Calu3 (cell line): ENCODE measurements at regions of chr1 and their contacts with region 1.

Region 1: DNA sequence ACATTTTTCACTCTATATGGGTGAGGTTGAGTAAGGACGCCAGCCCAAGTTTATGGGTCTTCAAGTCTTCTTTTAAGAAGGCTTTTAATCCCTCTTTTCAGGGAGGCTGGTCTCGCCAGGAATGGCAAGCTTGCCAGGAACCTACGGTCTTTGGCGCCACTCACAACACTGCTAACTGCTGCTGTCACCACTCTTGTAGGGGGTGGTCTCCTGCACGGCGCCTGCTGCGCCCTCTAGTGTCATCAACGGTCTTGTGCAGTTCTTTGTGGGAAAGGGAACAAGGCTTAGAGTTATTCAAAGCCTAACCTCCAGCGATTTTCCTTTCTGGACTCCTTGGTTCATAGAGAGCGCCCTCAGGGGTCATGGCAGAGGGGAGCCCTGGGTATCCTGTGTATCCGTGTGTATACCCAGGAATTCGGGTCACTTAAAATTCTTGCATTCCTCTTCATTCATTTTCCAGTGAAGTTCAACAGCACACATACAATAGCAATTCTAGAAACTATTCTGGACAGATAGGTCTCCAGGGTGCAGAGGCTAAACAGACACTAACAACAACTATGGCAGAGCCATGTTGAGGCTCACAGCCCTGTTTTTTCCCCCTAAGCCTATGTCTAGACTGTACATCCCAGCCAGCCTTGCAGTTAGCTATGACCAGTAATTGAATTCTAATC is 392.8 kb upstream of the CAMK1G start:
- DNase-seq: peak; percentile 51
- H3K4me3 Mint-ChIP-seq: no peak overlapping the region
- H3K27ac Mint-ChIP-seq: no peak overlapping the region
- H3K4me1 Mint-ChIP-seq: no peaks in the 10 kb centered on the region
- H3K27me3 Mint-ChIP-seq: no peaks in the 10 kb centered on the region
- CTCF ChIP-seq: peak; percentile 51

Region 2: GRCh38 chr1:209076688-209077087 is 114.0 kb before region 1 on chr1:
- CTCF ChIA-PET with region 1: no interaction called
- intact Hi-C with region 1: loop called (anchors 1 kb)
- DNase-seq: no peak
- H3K4me3 Mint-ChIP-seq: no peak overlapping the region
- H3K27ac Mint-ChIP-seq: no peak overlapping the region
- H3K4me1 Mint-ChIP-seq: peaks cover 11% of the 10 kb centered on the region
- H3K27me3 Mint-ChIP-seq: no peaks in the 10 kb centered on the region
- CTCF ChIP-seq: no peak